Right ventricle myocardium superior (tissue), 1 donor: ENCODE measurements at regions of chr12 and their contacts with region 1.

Region 1: GRCh38 chr12:109087250-109087649 is 6.0 kb downstream of the ALKBH2 start:
- DNase-seq: no peak
- ATAC-seq: peak; percentile 66

Region 2: GRCh38 chr12:108640802-108641445 is 446.3 kb before region 1 on chr12:
- intact Hi-C with region 1: loop called (anchors 10 kb)
- DNase-seq: no peak
- ATAC-seq: peak; percentile 5